Activated CD4-positive, alpha-beta T cell treated with anti-CD3 and anti-CD28 coated beads, Interleukin-2, amount 10 ng/mL, durations not matched to agents 7 days and 5 days (primary cell): ENCODE measurements at regions of chr1 and their contacts with region 1.

Region 1: GRCh38 chr1:193121616-193122593 is at the start of gene CDC73:
- DNase-seq: peak; percentile 97
- H3K4me3 Mint-ChIP-seq: peak within 1 kb of the TSS; percentile 92
- H3K27ac Mint-ChIP-seq: peak within 1 kb of the TSS; percentile 98
- H3K4me1 Mint-ChIP-seq: peaks cover 56% of the 10 kb centered on the region
- H3K27me3 Mint-ChIP-seq: peaks cover 7% of the 10 kb centered on the region
- total RNA-seq, gene CDC73: 53.9 to 66.2 TPM

Region 2: DNA sequence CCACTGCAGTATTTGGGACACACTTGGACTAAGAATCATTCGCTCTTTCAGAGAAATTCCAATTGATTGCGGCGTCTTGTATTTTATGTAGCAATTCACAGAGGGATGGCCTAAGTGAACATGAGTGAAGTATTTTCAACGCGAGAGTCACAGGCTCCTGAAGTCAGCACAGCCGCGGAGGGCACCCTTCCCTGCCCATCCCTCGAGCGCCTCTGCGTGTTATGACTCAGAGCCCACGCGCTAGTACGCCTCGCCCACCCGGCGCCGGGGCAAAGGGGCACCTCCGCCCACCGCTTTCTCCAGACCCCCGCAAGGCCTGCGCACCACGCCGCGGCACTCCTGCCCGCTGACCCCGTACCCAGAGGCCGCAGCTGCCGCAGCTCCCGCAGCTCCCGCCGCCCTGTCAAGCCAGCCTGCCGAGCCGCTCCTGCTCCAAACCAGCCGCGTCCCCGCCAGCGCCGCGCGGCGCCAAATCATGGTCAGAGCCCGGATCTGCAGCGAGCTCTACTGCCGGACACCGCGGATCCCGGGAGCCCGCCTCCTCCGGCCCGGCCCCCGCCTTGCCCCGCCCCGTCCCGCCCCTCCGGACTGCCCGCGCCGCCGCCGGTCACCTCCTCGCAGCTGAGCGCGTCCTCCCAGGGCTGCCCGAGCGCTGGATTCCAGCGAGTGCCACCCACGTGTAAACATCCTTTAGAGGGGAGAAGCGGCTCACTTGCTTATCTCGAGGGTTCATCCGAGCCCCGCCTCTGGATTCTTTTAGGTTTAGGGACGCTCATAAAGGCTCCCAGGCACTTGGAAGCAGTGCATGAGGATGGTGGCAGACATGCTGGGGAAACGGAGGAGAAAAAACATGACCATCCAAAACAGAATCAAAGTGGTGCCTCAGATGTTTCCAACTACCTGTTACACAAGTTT is 16.7 kb before region 1 on chr1 and contains the start of gene GLRX2:
- CTCF ChIA-PET with region 1: interaction called, 15 read pairs
- POLR2A ChIA-PET with region 1: no interaction called
- DNase-seq: peak; percentile 65
- H3K4me3 Mint-ChIP-seq: peak within 1 kb of the TSS; percentile 95
- H3K27ac Mint-ChIP-seq: peak within 1 kb of the TSS; percentile 88
- H3K4me1 Mint-ChIP-seq: peaks cover 26% of the 10 kb centered on the region
- H3K27me3 Mint-ChIP-seq: peaks cover 2% of the 10 kb centered on the region
- total RNA-seq, gene GLRX2: 18.7 to 19.5 TPM

Region 3: DNA sequence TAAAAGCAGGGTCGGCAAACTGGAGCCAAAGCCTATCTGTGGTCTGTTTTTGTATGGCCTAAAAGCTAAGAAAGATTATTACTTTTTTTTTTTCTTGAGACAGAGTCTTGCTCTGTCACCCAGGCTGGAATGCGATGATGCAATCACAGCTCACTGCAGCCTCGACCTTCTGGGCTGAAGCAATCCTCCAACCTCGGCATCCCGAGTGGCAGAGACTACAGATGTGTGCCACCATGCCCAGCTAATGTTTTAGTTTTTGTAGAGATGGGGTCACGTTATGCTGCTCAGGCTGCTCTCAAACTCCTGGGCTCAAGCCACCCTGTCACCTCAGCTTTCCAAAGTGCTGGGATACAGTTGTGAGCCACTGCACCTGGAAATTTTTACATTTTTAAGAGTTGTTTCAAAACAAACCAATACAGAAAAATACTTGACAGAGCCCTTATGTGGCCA is 10.2 kb before region 1 on chr1:
- CTCF ChIA-PET with region 1: interaction called, 10 read pairs
- POLR2A ChIA-PET with region 1: no interaction called
- DNase-seq: no peak
- H3K4me3 Mint-ChIP-seq: no peak overlapping the region
- H3K27ac Mint-ChIP-seq: no peak overlapping the region
- H3K4me1 Mint-ChIP-seq: no peaks in the 10 kb centered on the region
- H3K27me3 Mint-ChIP-seq: peaks cover 3% of the 10 kb centered on the region